Panc1 (cell line): ENCODE measurements at regions of chr6 and their contacts with region 1.

Region 1: DNA sequence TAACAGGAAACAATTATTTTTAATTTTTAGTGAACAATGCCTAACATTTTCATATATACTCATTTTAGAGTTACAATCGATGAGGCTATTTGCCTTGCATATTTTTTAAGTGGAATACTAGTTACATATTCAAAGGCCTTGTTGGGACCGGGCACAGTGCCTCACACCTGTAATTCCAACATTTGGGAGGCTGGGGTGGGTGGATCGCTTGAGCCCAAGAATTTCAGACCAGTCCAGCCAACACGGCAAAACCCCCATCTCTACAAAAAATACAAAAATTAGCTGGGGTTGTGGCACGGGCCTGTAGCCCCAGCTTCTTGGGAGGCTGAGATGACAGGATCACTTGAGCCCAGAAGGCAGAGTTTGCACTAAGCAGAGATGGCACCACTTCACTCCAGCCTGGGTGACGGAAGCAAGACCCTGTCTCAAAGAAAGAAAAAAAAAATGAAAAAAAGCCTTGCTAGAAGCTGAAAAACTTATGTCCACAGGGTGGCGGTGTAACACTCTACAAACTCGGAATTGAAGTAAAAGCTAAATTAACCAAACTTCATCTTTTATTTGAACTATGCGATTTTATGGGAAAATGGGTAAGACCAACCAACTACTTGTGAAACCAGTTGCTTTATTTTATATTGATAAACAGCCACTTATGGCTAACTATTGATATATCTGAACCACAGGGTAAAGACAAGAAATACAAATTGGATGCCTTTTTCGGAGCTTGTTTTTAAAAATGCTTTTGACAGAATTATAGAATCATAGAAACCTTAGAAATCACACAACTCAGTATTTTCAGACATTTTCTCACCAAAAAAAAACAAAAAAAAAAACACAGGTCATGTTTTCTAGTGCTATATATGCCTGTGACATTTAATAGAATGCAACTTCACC is 24.1 kb upstream of the ROS1 start:
- DNase-seq: peak; percentile 47
- ATAC-seq: no peak; the same call in 1 of the 2 replicates
- H3K4me3 ChIP-seq: peak overlapping the region in 1 of 2 experiments; percentile 30; a peak in 2 of 4 replicates
- H3K27ac ChIP-seq: no peak overlapping the region
- H3K4me1 ChIP-seq: peaks cover 6% of the 10 kb centered on the region; the same call in 1 of the 2 replicates
- H3K27me3 ChIP-seq: peaks cover 7% of the 10 kb centered on the region; the same call in 1 of the 2 replicates
- CTCF ChIP-seq: peak; percentile 83

Region 2: GRCh38 chr6:117555882-117556498 is 106.2 kb after region 1 on chr6:
- CTCF ChIA-PET with region 1: interaction called, 6 read pairs
- POLR2A ChIA-PET with region 1: no interaction called
- in situ Hi-C with region 1: no loop called
- intact Hi-C with region 1: loop called (anchors 1 kb)
- DNase-seq: no peak
- ATAC-seq: 0 out of 2 replicates have a peak, but pooled peaks have one; percentile 54
- H3K4me3 ChIP-seq: no peak overlapping the region
- H3K27ac ChIP-seq: peak overlapping the region; percentile 54
- H3K4me1 ChIP-seq: peaks cover 17% of the 10 kb centered on the region
- H3K27me3 ChIP-seq: no peaks in the 10 kb centered on the region
- CTCF ChIP-seq: peak; percentile 86; the same call in 1 of the 2 replicates

Region 3: GRCh38 chr6:117605169-117605826 is 155.5 kb after region 1 on chr6:
- CTCF ChIA-PET with region 1: interaction called, 5 read pairs
- POLR2A ChIA-PET with region 1: no interaction called
- in situ Hi-C with region 1: no loop called
- intact Hi-C with region 1: loop called (anchors 2 kb)
- DNase-seq: peak; percentile 70
- ATAC-seq: peak; percentile 51
- H3K4me3 ChIP-seq: no peak overlapping the region
- H3K27ac ChIP-seq: no peak overlapping the region
- H3K4me1 ChIP-seq: peaks cover 8% of the 10 kb centered on the region
- H3K27me3 ChIP-seq: no peaks in the 10 kb centered on the region
- CTCF ChIP-seq: peak; percentile 91

Region 4: GRCh38 chr6:117674991-117675657 is 225.3 kb after region 1 on chr6 and contains the start of gene NUS1:
- CTCF ChIA-PET with region 1: no interaction called
- POLR2A ChIA-PET with region 1: no interaction called
- in situ Hi-C with region 1: no loop called
- intact Hi-C with region 1: loop called (anchors 10 kb)
- DNase-seq: peak; percentile 88
- ATAC-seq: peak; percentile 99
- H3K4me3 ChIP-seq: peak within 1 kb of the TSS; percentile 67 to 99
- H3K27ac ChIP-seq: peak within 1 kb of the TSS; percentile 91
- H3K4me1 ChIP-seq: peaks cover 25% of the 10 kb centered on the region
- H3K27me3 ChIP-seq: no peaks in the 10 kb centered on the region
- CTCF ChIP-seq: peak; percentile 98
- total RNA-seq, gene NUS1: 57.3 TPM

Region 5: GRCh38 chr6:117687021-117687648 is 237.3 kb after region 1 on chr6:
- CTCF ChIA-PET with region 1: no interaction called
- POLR2A ChIA-PET with region 1: no interaction called
- in situ Hi-C with region 1: no loop called
- intact Hi-C with region 1: no loop called
- DNase-seq: no peak
- ATAC-seq: no peak
- H3K4me3 ChIP-seq: no peak overlapping the region
- H3K27ac ChIP-seq: no peak overlapping the region
- H3K4me1 ChIP-seq: peaks cover 3% of the 10 kb centered on the region; the same call in 1 of the 2 replicates
- H3K27me3 ChIP-seq: no peaks in the 10 kb centered on the region
- CTCF ChIP-seq: no peak